Activated T-helper 1 cell treated with anti-CD3 and anti-CD28 coated beads, Interleukin-12 subunit alpha, Interleukin-12 subunit beta, Interleukin-2, Interleukin-4 antibody, amounts not matched to agents 30 ng/mL and 10 ng/mL and 1 ng/mL, durations not matched to agents 14 hours and 24 hours and 36 hours (primary cell): ENCODE measurements at regions of chr5 and their contacts with region 1.

Region 1: GRCh38 chr5:150758531-150759333 is at the start of gene DCTN4:
- DNase-seq: peak; percentile 90
- H3K4me3 Mint-ChIP-seq: no peak within 1 kb of the TSS
- H3K27ac Mint-ChIP-seq: no peak within 1 kb of the TSS
- H3K4me1 Mint-ChIP-seq: peaks cover 34% of the 10 kb centered on the region
- H3K27me3 Mint-ChIP-seq: peaks cover 2% of the 10 kb centered on the region
- total RNA-seq, gene DCTN4: 42.3 and 46.4 TPM in 2 replicates

Region 2: DNA sequence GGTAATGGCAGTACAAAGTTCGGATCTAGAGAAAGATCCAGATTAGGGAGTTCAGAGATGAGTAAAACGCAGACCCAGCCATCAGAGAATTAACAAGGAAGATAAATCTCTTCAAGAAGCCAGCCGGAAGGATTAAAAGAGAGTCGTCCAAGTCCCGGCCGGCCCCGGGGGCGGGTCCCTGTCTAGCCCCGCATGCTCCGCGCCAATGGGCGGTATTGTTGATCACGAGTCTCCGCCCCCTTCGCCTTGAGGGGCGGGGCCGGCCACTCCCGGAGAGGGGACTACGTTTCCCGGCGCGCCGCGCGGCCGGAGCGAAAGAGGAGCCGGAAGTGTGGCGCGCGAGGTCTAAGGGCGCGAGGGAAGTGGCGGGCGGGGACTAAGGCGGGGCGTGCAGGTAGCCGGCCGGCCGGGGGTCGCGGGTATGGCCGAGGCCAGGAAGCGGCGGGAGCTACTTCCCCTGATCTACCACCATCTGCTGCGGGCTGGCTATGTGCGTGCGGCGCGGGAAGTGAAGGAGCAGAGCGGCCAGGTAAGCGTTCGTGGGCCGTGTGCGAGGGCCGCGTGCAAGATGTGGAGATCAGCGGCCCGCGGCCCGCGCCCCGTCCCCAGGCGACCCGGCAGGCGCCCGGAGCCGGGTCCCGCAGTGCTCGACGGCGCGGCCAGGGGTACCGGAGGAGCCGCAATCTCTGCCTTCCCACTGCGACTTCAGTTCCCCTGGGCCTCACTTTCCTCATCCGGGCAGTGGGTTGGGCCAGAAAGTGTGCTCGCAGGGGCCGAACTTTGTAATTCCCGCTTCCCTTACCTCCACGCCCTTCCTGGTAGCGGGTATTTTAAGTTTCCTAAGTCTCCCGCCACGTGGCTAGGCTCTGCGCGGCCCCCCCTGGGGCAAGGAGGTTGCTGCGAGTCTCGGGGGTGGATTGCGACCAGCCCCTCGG is 401.1 kb before region 1 on chr5 and contains the start of gene TCOF1:
- intact Hi-C with region 1: loop called (anchors 5 kb)
- DNase-seq: peak; percentile 97
- H3K4me3 Mint-ChIP-seq: peak within 1 kb of the TSS; percentile 93
- H3K27ac Mint-ChIP-seq: peak within 1 kb of the TSS; percentile 91
- H3K4me1 Mint-ChIP-seq: peaks cover 39% of the 10 kb centered on the region
- H3K27me3 Mint-ChIP-seq: no peaks in the 10 kb centered on the region
- total RNA-seq, gene TCOF1: 130 and 131 TPM in 2 replicates

Region 3: DNA sequence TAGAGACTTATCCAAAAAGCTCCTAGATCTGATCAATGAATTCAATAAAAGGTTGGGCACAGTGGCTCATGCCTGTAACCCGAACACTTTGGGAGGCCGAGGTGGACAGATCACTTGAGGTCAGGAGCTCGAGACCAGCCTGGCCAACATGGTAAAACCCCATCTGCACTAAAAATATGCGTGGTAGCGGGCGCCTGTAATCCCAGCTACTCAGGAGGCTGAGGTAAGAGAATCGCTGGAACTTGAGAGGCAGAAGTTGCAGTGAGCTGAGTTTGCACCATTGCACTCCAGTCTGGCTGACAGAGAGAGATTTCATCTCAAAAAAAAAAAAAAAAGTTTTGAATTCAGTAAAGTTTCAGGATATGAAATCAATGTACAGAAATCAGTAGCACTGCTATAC is 19.9 kb before region 1 on chr5:
- intact Hi-C with region 1: loop called (anchors 1 kb)
- DNase-seq: no peak
- H3K4me3 Mint-ChIP-seq: no peak overlapping the region
- H3K27ac Mint-ChIP-seq: no peak overlapping the region
- H3K4me1 Mint-ChIP-seq: peaks cover 85% of the 10 kb centered on the region
- H3K27me3 Mint-ChIP-seq: no peaks in the 10 kb centered on the region

Region 4: GRCh38 chr5:150789943-150790611 is 31.3 kb after region 1 on chr5:
- intact Hi-C with region 1: loop called (anchors 1 kb)
- DNase-seq: peak; percentile 63
- H3K4me3 Mint-ChIP-seq: peak overlapping the region; percentile 78
- H3K27ac Mint-ChIP-seq: peak overlapping the region; percentile 87
- H3K4me1 Mint-ChIP-seq: peaks cover 59% of the 10 kb centered on the region
- H3K27me3 Mint-ChIP-seq: no peaks in the 10 kb centered on the region